Sigmoid colon (tissue), 7 donors: ENCODE measurements at regions of chr22 and their contacts with region 1.

Region 1: DNA sequence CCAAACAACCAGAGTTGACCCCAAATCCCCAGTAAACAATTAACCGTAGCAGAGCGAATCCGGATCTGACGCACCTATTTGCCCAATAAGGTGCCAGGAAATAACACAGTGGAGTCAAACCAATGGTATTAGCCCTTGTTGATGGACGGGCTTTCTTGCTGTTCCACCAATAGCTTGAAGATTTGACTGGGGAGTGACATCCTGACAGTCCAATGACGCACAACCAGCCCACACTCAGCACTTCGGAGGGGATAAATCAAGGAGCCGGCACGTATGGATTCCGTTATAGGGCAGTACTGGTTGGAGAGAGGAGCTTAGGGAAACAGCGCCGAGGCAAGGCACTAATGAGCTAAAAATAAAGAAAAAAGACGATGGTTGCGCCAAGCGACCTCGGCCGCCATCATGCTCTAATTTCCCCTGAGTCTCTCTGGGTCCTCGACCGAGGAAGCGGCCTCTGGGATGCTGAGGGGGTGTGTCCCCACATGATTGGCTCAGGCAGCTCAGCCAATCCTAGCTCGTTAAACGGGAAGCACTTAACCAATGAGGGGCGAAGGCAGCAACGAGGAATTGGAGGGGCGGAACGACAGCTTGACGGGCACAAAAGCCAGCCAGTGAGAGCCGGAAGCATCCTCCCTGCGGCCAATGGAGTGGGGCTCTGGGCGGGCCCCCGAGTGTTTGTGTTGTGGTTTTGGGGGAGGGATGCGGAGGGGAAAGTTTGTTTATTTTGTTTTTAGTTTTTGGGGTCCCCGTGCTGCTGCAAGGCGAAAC is 49.5 kb downstream of the FAM83F start:
- DNase-seq: peak; percentile 99
- H3K4me3 ChIP-seq: peak overlapping the region; percentile 82 to 89 (median 88)
- H3K27ac ChIP-seq: peak overlapping the region; percentile 92 to 96 (median 94)
- H3K4me1 ChIP-seq: peaks cover 0 to 34% (median 26%) of the 10 kb centered on the region in 4 donors
- H3K27me3 ChIP-seq: peaks cover 0 to 9% (median under 1%) of the 10 kb centered on the region in 3 donors
- CTCF ChIP-seq: no peak
- EP300 ChIP-seq: no peak
- POLR2A ChIP-seq: peak; percentile 53 to 63

Region 2: GRCh38 chr22:39738746-39739145 is 305.5 kb before region 1 on chr22:
- intact Hi-C with region 1: no loop called
- DNase-seq: no peak
- H3K4me3 ChIP-seq: no peak overlapping the region
- H3K27ac ChIP-seq: no peak overlapping the region
- H3K4me1 ChIP-seq: no peaks in the 10 kb centered on the region
- H3K27me3 ChIP-seq: peaks cover 0 to 6% (median 2%) of the 10 kb centered on the region in 3 donors
- CTCF ChIP-seq: no peak
- EP300 ChIP-seq: no peak
- POLR2A ChIP-seq: no peak

Region 3: DNA sequence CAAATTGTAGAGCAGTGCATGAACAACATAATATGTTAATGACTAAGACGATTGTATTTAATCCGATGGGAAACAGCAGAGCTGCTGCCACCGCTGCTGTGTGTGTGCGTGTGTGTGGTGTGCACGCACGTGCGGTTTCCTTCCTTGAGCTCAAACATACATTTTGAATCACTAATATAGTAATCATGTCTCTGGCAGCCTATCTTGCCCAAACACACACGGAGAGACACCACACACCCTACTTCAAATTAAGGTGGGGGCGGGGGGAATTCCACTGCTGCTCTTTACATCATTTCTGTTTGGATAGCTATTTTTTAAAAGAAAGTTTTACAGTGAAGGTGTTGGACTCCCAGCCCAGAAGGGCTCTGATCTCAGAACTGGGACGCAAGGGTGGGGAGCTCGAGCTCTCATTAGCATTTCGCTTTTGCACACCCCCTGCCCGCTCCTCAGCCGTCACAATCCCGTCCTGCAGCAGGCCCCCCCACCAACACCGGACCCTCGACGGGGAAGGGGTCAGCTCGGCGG is 50.2 kb before region 1 on chr22:
- intact Hi-C with region 1: no loop called
- DNase-seq: no peak
- H3K4me3 ChIP-seq: no peak overlapping the region
- H3K27ac ChIP-seq: no peak overlapping the region
- H3K4me1 ChIP-seq: peaks cover 0 to 18% (median 8%) of the 10 kb centered on the region in 4 donors
- H3K27me3 ChIP-seq: peaks cover 16 to 53% (median 47%) of the 10 kb centered on the region in 3 donors
- CTCF ChIP-seq: no peak
- EP300 ChIP-seq: no peak
- POLR2A ChIP-seq: no peak

Region 4: DNA sequence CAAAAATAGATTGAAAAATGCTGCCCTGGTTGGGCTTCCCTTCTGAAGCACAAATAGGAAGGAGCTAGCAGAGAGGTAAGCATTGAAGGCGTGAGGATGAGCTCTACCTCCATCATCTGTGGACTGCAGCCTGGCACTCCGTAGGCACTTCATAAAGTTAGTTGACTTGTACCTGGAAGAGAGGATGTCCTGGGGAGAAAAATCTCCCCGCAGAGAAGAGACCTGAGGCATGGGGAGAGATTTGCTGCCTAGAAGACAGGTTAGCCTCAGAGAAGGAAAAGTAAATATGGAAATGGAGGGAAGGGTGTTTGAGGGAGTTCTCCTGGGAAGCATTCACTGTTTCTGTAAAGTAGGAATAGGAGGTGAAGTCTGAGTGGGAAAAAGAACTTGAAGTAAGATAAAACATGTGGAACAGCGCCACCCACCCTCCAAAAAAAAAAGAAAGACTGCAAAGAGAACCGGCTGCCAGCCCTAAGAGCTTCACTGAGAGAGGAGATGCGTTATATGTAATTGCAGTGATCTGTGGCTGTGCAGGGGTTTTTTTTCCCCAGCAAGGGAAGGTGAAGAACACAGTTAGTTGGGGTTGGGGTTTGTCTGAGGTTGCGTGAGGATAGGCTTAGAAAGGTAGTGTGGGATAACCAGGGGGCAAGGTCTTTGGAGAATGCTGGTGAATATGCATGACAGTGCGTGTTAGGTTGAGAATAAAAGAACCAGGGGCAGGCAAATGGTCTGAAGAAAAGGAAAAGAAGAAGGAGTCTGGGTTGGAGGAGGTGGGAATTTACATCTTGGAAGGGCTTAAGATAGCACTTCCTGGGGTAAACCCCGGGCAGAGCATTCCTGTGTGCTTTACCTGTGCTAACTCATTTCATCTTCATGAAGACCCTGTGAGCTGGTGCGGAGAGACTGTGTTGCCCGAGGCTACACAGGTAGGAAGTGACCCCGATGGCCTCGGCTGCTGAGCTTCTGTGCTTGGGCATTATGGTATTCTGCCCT is 149.4 kb after region 1 on chr22:
- intact Hi-C with region 1: loop called (anchors 5 kb)
- DNase-seq: no peak
- H3K4me3 ChIP-seq: no peak overlapping the region
- H3K27ac ChIP-seq: peak overlapping the region; percentile 32 to 89 (median 58)
- H3K4me1 ChIP-seq: peaks cover 0 to 100% (median 85%) of the 10 kb centered on the region in 4 donors
- H3K27me3 ChIP-seq: no peaks in the 10 kb centered on the region
- CTCF ChIP-seq: peak in 3 of 4 experiments; percentile 16 to 20 (median 17)
- EP300 ChIP-seq: no peak
- POLR2A ChIP-seq: no peak

Region 5: DNA sequence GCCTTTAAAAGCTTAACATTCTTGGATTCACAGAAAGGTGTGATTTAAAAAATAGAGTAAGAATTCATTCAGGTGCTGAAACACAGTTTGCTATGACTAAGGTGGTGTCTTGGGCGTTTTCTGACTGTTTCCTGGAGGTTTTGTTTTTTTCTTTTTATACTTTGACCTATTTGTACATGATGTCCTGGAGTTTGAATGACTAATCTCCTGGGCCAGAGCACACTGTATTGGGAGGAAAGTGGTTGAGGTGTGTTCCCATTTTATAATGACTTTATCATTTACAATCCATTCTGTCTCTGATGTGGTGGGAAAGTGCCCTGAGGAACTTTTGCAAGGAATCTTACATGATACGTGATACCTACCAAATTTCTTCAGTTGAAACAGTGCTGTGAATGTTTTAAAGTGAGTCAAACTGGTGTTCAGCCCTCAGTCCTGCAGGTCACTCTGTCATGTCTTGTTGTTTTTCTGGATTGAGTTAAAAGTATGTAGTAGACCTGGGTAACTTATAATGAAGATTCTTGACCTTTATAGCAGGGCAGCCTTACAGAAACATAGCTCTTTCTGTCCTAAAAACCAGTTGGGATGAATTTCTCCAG is 214.3 kb after region 1 on chr22:
- intact Hi-C with region 1: no loop called
- DNase-seq: no peak
- H3K4me3 ChIP-seq: no peak overlapping the region
- H3K27ac ChIP-seq: peak overlapping the region in 3 of 4 donors; percentile 7 to 64 (median 11)
- H3K4me1 ChIP-seq: peaks cover 0 to 28% (median 23%) of the 10 kb centered on the region in 4 donors
- H3K27me3 ChIP-seq: no peaks in the 10 kb centered on the region
- CTCF ChIP-seq: no peak
- EP300 ChIP-seq: no peak
- POLR2A ChIP-seq: no peak

Region 6: DNA sequence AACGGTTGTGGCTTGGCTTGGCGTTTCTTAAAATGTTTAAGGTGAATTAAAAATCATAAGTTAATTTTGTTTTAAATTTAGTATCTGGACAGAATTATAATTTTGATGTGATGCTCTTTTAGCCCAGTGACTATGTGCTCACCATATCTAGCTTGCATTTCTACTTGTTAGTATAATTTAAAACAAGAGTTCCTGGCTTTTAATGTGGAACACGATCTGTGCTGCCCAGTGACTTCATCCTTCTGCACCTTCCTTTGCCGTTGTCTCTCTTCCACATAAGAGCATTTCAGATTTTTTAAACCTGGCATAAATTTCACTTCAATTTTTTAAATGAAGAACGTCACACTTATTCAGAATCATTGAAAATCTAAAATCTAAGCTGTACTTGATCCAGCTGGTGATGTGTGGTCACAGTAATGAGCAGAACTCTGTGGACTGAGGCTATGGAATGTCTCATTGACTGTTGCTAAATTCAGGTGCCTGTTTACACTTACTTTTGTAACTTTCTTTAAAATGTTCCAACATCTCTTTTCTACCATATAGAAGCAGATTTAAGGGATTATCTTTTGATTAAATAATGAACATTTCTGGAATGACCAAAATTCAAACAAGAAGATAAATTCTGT is 226.6 kb after region 1 on chr22:
- intact Hi-C with region 1: loop called (anchors 5 kb)
- DNase-seq: no peak
- H3K4me3 ChIP-seq: no peak overlapping the region
- H3K27ac ChIP-seq: peak overlapping the region in 2 of 4 donors; percentile 28 to 33
- H3K4me1 ChIP-seq: peaks cover 0 to 7% (median 4%) of the 10 kb centered on the region in 4 donors
- H3K27me3 ChIP-seq: no peaks in the 10 kb centered on the region
- CTCF ChIP-seq: no peak
- EP300 ChIP-seq: no peak
- POLR2A ChIP-seq: no peak

Region 7: DNA sequence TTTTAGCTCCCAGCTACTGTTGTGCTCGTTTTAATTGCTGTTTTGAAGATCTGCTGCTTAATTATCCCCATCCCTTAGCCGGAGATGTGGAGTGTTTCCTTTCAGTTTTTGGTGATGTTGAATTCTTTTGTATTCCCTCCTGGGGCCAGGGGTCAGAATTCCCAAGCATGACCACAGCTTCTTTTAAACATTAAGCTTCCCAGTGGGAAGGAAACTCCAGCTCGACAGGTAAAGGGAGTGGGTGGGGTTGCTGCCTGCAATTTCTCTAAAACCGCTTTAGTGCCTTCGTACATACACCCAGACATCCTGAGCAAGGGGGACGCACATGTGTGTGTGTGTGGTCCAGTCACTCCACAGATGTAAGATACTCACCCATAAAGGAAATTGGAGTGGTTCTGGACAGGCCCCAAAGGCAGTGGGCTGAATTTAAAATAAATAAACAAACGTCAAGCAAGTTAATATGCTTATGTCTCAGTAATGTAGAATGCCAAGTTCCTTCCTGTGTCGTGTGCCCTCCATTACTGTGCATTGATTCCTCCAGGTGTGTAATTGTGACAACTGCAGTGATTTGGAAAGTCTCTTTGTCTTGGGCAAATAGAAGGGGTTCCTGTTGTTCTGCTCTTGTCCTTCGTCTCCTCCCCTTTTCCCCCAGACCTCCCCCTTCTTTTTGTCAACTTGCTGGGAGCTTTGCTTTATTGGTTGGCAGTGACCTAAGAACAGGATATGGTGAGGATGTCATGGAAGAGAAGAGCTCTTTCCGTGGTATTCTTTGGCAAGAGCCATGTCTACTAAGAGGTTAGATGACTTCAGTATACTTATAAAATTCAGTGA is 282.8 kb after region 1 on chr22:
- intact Hi-C with region 1: no loop called
- DNase-seq: no peak
- H3K4me3 ChIP-seq: no peak overlapping the region
- H3K27ac ChIP-seq: peak overlapping the region in 2 of 4 donors; percentile 24 to 31
- H3K4me1 ChIP-seq: peaks cover 0 to 30% (median 20%) of the 10 kb centered on the region in 4 donors
- H3K27me3 ChIP-seq: no peaks in the 10 kb centered on the region
- CTCF ChIP-seq: no peak
- EP300 ChIP-seq: no peak
- POLR2A ChIP-seq: no peak

Region 8: GRCh38 chr22:40346178-40347118 is 302.2 kb after region 1 on chr22 and contains the start of gene ADSL:
- intact Hi-C with region 1: loop called (anchors 1 kb)
- DNase-seq: peak; percentile 93
- H3K4me3 ChIP-seq: peak within 1 kb of the TSS; percentile 67 to 73 (median 69)
- H3K27ac ChIP-seq: peak within 1 kb of the TSS; percentile 87 to 90 (median 89)
- H3K4me1 ChIP-seq: peaks cover 0 to 24% (median 21%) of the 10 kb centered on the region in 4 donors
- H3K27me3 ChIP-seq: no peaks in the 10 kb centered on the region
- CTCF ChIP-seq: no peak
- EP300 ChIP-seq: no peak
- POLR2A ChIP-seq: peak; percentile 77 to 79
- total RNA-seq, gene ADSL: 86.7 to 469 (median 111) TPM